ENCODE measurements at regions of chr3 and their contacts with region 1.

Region 1: GRCh38 chr3:49133226-49133951 is 539 bp upstream of the LAMB2 start:
- DNase-seq: peak; percentile 59
- H3K4me3 ChIP-seq: peak overlapping the region; percentile 95
- CTCF ChIP-seq: no peak

Region 2: DNA sequence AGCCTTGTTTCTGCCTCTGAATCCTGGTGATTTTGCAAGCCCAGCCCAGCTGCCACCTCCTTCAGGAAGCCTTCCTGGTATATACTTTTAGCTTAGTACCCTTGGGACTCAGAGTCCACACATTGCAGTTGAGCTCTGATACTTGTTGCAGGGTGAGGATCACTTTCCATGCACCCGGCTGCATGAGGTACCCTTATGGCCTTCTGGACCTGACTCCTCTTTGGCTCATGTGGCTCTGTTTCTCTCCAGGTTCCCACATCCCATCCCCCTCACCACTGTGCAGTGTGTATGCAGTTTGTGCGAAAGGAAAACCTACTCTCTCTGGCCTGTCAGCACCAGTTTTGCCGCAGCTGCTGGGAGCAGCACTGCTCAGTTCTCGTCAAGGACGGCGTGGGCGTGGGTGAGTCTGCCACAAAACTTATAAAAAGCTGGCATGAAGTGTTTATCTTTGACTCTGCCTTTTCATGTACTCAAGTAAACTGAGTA is 166.5 kb before region 1 on chr3:
- CTCF ChIA-PET with region 1: no interaction called
- POLR2A ChIA-PET with region 1: no interaction called
- DNase-seq: no peak
- H3K4me3 ChIP-seq: no peak overlapping the region
- CTCF ChIP-seq: no peak

Region 3: DNA sequence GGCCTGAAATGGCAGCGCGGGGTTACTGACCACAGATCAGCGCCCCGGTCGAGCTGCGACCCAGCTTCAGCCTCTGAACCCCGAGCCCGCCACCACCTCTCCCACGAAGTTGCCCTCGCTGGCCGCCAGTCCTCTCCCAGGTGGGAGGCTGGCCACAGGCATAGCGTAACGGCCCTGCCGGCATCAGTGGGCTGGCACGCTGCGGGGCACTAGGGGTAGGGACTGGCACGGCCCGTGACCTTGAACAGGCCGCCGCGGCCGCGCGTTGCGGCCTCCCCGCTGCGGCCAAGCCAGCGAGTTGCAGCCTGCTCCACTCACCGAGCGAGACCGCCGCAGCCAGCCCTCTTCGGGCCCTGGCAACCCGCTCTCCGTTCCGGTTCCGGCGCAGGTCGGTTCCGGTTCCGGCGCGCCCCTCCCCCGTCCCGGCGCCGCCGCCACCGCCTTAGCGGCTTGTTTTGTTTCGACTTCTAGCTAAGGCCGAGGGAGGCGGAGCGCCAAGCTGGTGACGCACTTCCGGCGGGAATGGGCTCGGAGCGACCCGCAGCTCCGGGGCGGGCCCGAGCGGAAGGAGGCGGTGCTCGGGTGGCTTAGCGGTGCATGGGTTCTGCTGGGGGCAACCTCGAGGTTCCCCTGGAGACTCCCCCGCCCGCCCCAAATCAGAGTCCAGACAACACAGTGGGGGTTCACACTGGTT is 12.8 kb before region 1 on chr3 and contains the start of gene USP19:
- CTCF ChIA-PET with region 1: interaction called, 4 read pairs
- POLR2A ChIA-PET with region 1: interaction called, 25 read pairs
- DNase-seq: no peak
- H3K4me3 ChIP-seq: peak within 1 kb of the TSS; percentile 96
- CTCF ChIP-seq: no peak

Measured in AG04449 (cell line).